IMR-90 (cell line): ENCODE measurements at regions of chr3 and their contacts with region 1.

Region 1: GRCh38 chr3:79086514-79086913 is 681.3 kb downstream of the ROBO1 start:
- DNase-seq: peak; percentile 63
- ATAC-seq: peak; percentile 63
- H3K4me3 ChIP-seq: no peak overlapping the region
- H3K27ac ChIP-seq: no peak overlapping the region
- H3K4me1 ChIP-seq: peaks cover 3% of the 10 kb centered on the region; the same call in 1 of the 2 replicates
- H3K27me3 ChIP-seq: no peaks in the 10 kb centered on the region
- CTCF ChIP-seq: peak; percentile 76
- POLR2A ChIP-seq: no peak
- RAD21 ChIP-seq: peak; percentile 71

Region 2: DNA sequence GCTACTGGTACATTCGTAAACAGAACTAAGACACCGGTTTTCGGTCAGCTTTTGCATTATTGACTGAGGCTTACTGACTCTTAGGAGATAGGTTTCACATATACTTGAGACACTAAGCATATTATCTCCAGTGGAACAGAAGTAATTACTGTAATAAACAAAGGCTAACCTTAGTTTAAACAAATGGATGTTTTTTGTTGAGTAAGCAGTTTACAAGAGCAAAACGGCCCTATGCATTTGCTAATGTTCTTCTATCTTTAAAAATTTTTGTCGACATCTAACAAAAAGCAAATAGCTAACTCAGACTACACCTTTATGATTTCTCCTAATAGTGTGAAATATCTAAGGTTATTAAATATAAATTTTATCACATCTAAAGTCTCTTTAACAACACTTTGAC is 16.8 kb after region 1 on chr3:
- CTCF ChIA-PET with region 1: interaction called, 21 read pairs
- POLR2A ChIA-PET with region 1: no interaction called
- dilution Hi-C with region 1: no loop called
- in situ Hi-C with region 1: no loop called
- intact Hi-C with region 1: no loop called
- DNase-seq: no peak
- ATAC-seq: no peak
- H3K4me3 ChIP-seq: no peak overlapping the region
- H3K27ac ChIP-seq: no peak overlapping the region
- H3K4me1 ChIP-seq: no peaks in the 10 kb centered on the region
- H3K27me3 ChIP-seq: no peaks in the 10 kb centered on the region
- CTCF ChIP-seq: no peak
- POLR2A ChIP-seq: no peak
- RAD21 ChIP-seq: no peak

Region 3: DNA sequence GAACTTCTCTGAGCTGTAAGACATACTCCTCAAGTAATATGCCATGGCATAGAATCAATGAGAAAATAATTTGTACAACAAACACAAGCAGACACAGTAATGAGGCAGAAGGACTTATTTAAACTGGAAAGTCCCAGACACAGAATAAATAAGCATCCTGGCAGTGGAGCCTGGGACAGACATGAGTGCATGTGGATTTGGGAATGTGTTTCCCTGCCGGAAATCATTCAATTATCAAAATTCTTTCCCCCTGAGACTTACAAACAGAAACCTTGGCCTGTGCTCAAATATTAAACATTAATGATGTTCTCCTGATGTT is 161.2 kb after region 1 on chr3:
- CTCF ChIA-PET with region 1: no interaction called
- POLR2A ChIA-PET with region 1: no interaction called
- dilution Hi-C with region 1: no loop called
- in situ Hi-C with region 1: no loop called
- intact Hi-C with region 1: loop called (anchors 5 kb)
- DNase-seq: peak; percentile 84
- ATAC-seq: peak; percentile 85
- H3K4me3 ChIP-seq: no peak overlapping the region
- H3K27ac ChIP-seq: no peak overlapping the region
- H3K4me1 ChIP-seq: no peaks in the 10 kb centered on the region; the same call in 1 of the 2 replicates
- H3K27me3 ChIP-seq: no peaks in the 10 kb centered on the region
- CTCF ChIP-seq: no peak
- POLR2A ChIP-seq: no peak
- RAD21 ChIP-seq: no peak

Region 4: DNA sequence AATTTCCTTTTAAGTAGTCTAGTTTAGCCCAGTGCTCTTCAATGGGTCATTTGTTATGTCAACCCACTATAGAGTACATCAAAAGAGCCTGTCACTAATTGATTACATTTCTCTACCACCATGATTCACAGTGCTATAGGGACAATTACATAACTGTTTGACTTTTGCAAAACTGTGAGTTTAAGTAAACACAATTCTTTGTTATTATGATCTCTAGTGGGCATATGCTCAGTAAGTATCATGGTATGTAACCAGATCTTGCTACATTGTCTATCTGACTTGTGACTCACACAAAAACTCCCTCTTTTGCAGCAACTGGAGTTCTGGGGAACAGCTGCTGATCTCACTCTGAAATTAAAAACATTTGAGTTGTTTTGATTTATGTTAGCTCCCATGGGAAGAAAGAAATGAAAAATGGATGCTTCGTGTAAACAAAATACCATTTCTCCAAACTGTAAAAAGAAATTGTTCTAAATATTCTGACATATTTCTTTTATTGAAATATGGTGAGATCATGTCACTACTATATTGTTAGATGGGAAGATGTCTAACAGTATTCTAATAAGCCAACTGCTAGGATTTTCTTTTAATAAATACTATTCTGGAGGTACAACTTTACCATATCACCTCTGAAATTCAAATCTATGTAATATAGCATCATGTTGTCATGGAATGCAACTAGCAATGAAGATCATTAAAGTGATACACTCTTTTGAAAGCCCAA is 210.9 kb after region 1 on chr3:
- CTCF ChIA-PET with region 1: interaction called, 3 read pairs
- POLR2A ChIA-PET with region 1: no interaction called
- dilution Hi-C with region 1: no loop called
- in situ Hi-C with region 1: no loop called
- intact Hi-C with region 1: loop called (anchors 5 kb)
- DNase-seq: peak; percentile 97
- ATAC-seq: peak; percentile 97
- H3K4me3 ChIP-seq: no peak overlapping the region
- H3K27ac ChIP-seq: no peak overlapping the region
- H3K4me1 ChIP-seq: peaks cover 4% of the 10 kb centered on the region
- H3K27me3 ChIP-seq: no peaks in the 10 kb centered on the region
- CTCF ChIP-seq: no peak
- POLR2A ChIP-seq: no peak
- RAD21 ChIP-seq: no peak

Region 5: GRCh38 chr3:79497447-79498111 is 411.1 kb after region 1 on chr3:
- CTCF ChIA-PET with region 1: no interaction called
- POLR2A ChIA-PET with region 1: no interaction called
- dilution Hi-C with region 1: no loop called
- in situ Hi-C with region 1: no loop called
- intact Hi-C with region 1: loop called (anchors 5 kb)
- DNase-seq: peak; percentile 11
- ATAC-seq: 0 out of 2 replicates have a peak, but pooled peaks have one; percentile 21
- H3K4me3 ChIP-seq: no peak overlapping the region
- H3K27ac ChIP-seq: no peak overlapping the region
- H3K4me1 ChIP-seq: no peaks in the 10 kb centered on the region
- H3K27me3 ChIP-seq: no peaks in the 10 kb centered on the region
- CTCF ChIP-seq: peak; percentile 73
- POLR2A ChIP-seq: no peak
- RAD21 ChIP-seq: peak; percentile 59